GM12878 (cell line): ENCODE measurements at regions of chr9 and their contacts with region 1.

Region 1: DNA sequence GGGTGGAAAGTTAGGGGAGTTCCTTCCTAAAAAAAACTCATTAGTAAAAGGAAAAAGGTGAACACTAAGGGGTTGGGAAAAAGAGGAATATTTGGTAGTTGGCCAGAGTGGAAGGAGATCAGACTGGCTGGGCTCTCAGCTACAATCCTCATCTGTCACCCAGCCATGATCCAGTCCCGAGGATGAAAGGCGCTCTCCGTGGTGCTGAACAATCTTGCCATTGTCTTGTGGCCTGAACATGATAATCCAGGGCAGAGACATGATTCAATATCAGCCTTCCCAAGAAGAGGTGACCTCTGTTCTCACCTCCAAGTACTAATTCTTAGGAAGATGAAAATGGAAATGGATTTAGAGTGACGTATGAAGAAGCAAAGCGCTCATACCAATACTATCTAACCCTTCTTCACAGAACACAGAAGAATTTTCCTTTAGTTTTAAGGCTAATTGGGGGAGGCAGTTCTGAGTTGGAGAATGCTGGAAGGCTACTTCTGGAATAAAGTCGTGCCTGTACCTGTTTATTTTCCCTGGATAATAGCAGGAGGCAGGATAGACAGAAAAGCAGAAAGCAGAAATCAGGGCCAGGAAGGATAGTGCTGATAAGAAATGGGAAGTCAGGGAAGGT is 36.6 kb upstream of the MYORG start:
- DNase-seq: no peak
- ATAC-seq: no peak
- H3K4me3 ChIP-seq: no peak overlapping the region
- H3K27ac ChIP-seq: no peak overlapping the region
- H3K4me1 ChIP-seq: no peaks in the 10 kb centered on the region
- H3K27me3 ChIP-seq: no peaks in the 10 kb centered on the region; a peak in 2 of 4 replicates
- CTCF ChIP-seq: no peak
- EP300 ChIP-seq: no peak
- POLR2A ChIP-seq: no peak
- RAD21 ChIP-seq: no peak

Region 2: GRCh38 chr9:34363619-34364351 is 49.6 kb before region 1 on chr9:
- CTCF ChIA-PET with region 1: no interaction called
- POLR2A ChIA-PET with region 1: no interaction called
- RAD21 ChIA-PET with region 1: no interaction called
- SMC1A ChIA-PET with region 1: no interaction called
- in situ Hi-C with region 1: no loop called
- intact Hi-C with region 1: loop called (anchors 10 kb)
- DNase-seq: no peak
- ATAC-seq: no peak
- H3K4me3 ChIP-seq: no peak overlapping the region
- H3K27ac ChIP-seq: no peak overlapping the region
- H3K4me1 ChIP-seq: no peaks in the 10 kb centered on the region
- H3K27me3 ChIP-seq: no peaks in the 10 kb centered on the region
- CTCF ChIP-seq: no peak
- EP300 ChIP-seq: no peak
- POLR2A ChIP-seq: no peak
- RAD21 ChIP-seq: no peak